Mammary epithelial cell (primary cell): ENCODE measurements at regions of chr2 and their contacts with region 1.

Region 1: GRCh38 chr2:200787348-200788120 is 24.2 kb upstream of the BZW1 start:
- DNase-seq: peak; percentile 96
- H3K4me3 ChIP-seq: peak overlapping the region in 1 of 3 experiments; percentile 8
- H3K27ac ChIP-seq: peak overlapping the region; percentile 94
- H3K4me1 ChIP-seq: peaks cover 44% of the 10 kb centered on the region
- H3K27me3 ChIP-seq: no peaks in the 10 kb centered on the region
- CTCF ChIP-seq: no peak

Region 2: DNA sequence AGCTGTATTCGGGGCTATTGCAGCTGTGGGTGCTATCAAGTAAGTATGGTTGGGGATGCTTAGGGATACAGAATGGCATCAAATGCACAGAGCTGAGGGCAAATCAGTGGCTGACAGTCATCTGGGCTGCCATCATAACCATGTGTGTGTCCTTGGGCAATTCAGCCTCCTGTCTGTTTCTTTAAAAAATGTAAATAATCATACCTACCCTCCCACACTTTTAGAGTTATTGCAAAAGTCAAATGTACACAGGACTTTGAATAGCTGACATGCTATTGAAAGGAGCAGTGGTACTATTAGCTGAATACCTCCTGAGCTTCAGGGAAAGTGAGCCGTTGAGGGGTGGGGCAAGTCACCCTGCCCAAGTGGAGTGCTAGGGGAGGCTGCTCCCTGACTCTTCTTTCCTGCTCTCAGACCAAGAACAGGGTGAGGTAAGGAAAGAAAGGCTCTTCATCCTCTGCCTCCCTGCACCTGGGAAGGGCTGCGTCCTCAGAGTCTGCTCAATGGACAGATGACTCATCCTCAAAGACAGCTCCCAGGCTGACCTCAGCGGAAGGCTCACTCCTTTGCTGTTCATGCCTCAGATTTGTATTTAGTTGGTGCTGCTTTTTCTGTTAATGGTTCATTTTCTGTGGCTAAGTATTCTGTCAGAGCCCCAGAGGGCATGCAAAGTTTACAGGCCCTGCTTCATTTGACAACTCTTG is 30.8 kb before region 1 on chr2:
- CTCF ChIA-PET with region 1: no interaction called
- dilution Hi-C with region 1: no loop called
- in situ Hi-C with region 1: no loop called
- intact Hi-C with region 1: loop called (anchors 1 kb)
- DNase-seq: peak; percentile 93
- H3K4me3 ChIP-seq: no peak overlapping the region
- H3K27ac ChIP-seq: peak overlapping the region; percentile 58
- H3K4me1 ChIP-seq: peaks cover 53% of the 10 kb centered on the region
- H3K27me3 ChIP-seq: no peaks in the 10 kb centered on the region
- CTCF ChIP-seq: no peak

Region 3: GRCh38 chr2:200800458-200800857 is 12.9 kb after region 1 on chr2:
- CTCF ChIA-PET with region 1: no interaction called
- dilution Hi-C with region 1: no loop called
- in situ Hi-C with region 1: no loop called
- intact Hi-C with region 1: no loop called
- DNase-seq: no peak
- H3K4me3 ChIP-seq: no peak overlapping the region
- H3K27ac ChIP-seq: no peak overlapping the region
- H3K4me1 ChIP-seq: no peaks in the 10 kb centered on the region
- H3K27me3 ChIP-seq: no peaks in the 10 kb centered on the region
- CTCF ChIP-seq: no peak